Spleen (tissue), 13 donors: ENCODE measurements at regions of chr3 and their contacts with region 1.

Region 1: GRCh38 chr3:159731254-159731653 is 257.4 kb upstream of the IL12A start:
- DNase-seq: no peak
- H3K4me3 ChIP-seq: no peak overlapping the region
- H3K27ac ChIP-seq: peak overlapping the region in 3 of 8 donors; percentile 20 to 67 (median 66)
- H3K4me1 ChIP-seq: peaks cover 0 to 29% (median 16%) of the 10 kb centered on the region in 6 donors
- H3K27me3 ChIP-seq: no peaks in the 10 kb centered on the region
- CTCF ChIP-seq: no peak
- POLR2A ChIP-seq: no peak

Region 2: DNA sequence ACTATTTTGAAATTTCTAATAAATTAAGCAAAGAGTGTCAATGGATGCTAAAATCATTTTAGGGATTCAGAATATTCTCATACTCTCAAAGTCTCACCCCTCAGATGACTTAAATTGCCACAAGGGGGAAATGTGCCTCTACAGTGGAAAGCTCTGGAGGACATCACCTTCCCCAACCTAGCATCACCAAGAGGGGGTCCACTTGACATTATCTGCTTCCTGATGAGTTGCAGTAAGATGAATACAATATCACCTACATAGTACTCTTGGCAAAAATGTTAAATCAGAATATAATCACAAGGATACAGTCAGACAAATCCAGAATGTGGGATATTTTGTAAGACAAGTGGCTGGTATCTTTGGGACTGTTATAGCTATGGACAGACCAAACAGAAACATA is 639.3 kb before region 1 on chr3:
- intact Hi-C with region 1: no loop called
- DNase-seq: no peak
- H3K4me3 ChIP-seq: no peak overlapping the region
- H3K27ac ChIP-seq: no peak overlapping the region
- H3K4me1 ChIP-seq: no peaks in the 10 kb centered on the region
- H3K27me3 ChIP-seq: no peaks in the 10 kb centered on the region
- CTCF ChIP-seq: no peak
- POLR2A ChIP-seq: no peak

Region 3: DNA sequence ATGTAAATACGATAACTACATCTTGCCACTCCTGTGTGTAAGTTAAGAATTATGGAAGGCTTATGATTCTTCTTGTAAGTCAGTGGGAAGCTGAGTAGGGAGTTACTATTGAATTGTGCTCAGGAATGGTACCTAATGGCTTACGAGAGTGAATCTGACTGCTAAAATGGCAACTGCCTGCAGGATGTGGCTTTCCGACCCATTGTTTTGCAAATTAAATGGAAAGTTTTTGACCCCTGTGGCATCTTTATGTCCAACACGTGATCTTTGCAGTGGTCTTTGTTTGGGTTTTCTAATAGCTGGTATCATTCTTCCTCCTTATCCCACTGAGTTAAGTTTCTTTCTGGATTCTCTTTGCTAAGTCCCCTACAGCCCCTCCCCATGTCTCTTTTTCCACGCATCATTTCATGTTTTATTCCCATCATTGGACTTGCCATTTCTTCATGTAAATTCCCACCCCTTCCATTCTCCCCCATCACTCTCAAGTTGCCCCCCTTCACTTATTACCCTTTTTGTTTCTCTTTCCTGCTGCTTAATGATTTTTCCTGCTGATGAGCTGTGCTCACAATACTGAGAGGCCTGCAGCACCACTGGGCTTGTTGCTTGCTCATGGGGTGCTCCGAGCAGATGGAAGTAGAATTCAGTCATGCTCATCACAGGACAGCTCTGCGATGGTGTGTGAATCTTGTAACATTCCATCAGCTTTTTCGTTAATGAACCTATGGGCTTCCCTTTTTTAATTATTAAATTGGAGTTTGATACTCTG is 170.9 kb before region 1 on chr3:
- intact Hi-C with region 1: no loop called
- DNase-seq: no peak
- H3K4me3 ChIP-seq: no peak overlapping the region
- H3K27ac ChIP-seq: no peak overlapping the region
- H3K4me1 ChIP-seq: no peaks in the 10 kb centered on the region
- H3K27me3 ChIP-seq: no peaks in the 10 kb centered on the region
- CTCF ChIP-seq: no peak
- POLR2A ChIP-seq: no peak

Region 4: GRCh38 chr3:159763602-159764489 is 32.6 kb after region 1 on chr3:
- intact Hi-C with region 1: loop called (anchors 2 kb)
- DNase-seq: peak; percentile 83
- H3K4me3 ChIP-seq: peak overlapping the region; percentile 56 to 83 (median 64)
- H3K27ac ChIP-seq: peak overlapping the region; percentile 72 to 93 (median 89)
- H3K4me1 ChIP-seq: peaks cover 0 to 59% (median 42%) of the 10 kb centered on the region in 6 donors
- H3K27me3 ChIP-seq: peaks cover 0 to 57% (median 30%) of the 10 kb centered on the region in 7 donors
- CTCF ChIP-seq: peak in 6 of 11 experiments; percentile 38 to 50 (median 42)
- POLR2A ChIP-seq: peak in 1 of 3 donors; percentile 43